Cardiac septum (tissue), 1 donor: ENCODE measurements at regions of chr7 and their contacts with region 1.

Region 1: GRCh38 chr7:25851332-25852210 is 300.4 kb upstream of the NFE2L3 start:
- DNase-seq: peak; percentile 89

Region 2: DNA sequence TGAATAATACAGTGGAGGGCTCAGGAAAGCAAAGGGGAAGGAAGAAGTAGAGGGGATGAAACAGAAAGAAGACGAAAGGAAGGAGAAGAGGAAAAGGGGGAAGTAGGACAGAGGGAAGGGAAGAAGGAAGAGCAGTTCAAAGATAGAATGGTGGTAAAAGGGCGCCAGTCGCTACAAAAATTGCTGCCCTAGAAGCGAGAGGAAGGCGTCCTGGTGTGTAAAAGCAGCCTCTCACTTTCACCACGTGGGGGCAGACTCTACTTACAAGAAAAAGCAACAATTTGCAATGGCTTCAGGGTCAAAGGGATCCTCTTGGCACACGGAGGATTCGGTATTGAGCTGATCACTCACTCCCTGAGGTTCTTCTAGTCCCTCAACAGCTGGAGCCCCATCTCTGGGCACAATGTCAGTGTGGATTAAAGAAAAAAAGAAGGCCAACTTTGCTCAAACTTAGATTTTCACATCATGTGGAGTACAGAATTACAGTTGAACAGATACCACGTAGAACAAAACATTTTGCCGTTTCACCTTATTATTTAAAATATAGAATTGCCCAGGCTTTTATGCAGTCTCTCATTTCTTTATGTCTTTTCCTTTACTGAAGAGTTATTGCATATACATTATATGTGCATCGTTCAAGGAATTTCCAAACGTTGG is 591.9 kb before region 1 on chr7:
- intact Hi-C with region 1: loop called (anchors 2 kb)
- DNase-seq: no peak

Region 3: DNA sequence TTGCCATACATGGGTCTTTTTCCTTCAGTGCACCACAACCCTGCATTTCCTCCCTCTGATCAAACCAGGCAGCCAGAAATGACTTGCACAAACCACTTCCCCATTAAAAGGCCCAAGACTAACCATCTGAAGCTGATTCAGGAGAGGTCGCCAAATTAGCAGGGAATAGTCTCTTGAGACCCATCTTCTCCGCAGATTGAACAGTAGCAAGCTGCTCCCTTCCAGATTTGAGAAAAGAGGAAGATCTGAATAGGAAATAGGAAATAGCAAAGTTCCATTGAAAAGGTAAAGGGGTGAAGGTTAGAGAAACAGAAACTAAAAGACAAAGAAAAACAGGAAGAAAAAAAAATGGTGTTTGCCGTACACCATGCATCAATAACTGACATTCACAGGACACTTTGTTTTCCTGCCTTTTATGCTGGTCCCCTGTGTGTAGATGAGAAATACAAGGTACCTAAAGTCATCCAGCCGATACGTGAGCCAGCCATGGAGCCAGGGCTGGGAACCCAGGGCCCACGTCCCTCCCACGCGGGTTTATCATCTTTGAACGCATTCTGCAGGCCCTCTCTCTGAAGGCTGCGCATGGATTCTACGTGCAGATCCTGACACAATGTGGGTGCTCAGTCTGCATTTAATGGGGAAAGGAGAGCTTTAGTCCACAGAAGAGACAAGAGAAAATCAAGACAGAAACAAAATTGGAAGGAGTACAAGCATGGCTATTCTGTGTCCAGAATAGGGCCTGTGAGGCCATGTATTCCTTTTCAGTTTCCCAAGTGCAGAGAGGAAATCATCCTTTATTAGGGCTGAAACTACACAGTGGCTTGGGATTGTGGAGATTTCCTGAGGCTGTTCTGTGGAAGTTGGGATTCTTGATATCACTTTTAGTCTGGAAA is 354.8 kb before region 1 on chr7:
- intact Hi-C with region 1: loop called (anchors 5 kb)
- DNase-seq: no peak

Region 4: GRCh38 chr7:25619963-25620799 is 231.4 kb before region 1 on chr7:
- intact Hi-C with region 1: loop called (anchors 5 kb)
- DNase-seq: no peak

Region 5: GRCh38 chr7:25716421-25716820 is 135.2 kb before region 1 on chr7:
- intact Hi-C with region 1: loop called (anchors 10 kb)
- DNase-seq: no peak

Region 6: DNA sequence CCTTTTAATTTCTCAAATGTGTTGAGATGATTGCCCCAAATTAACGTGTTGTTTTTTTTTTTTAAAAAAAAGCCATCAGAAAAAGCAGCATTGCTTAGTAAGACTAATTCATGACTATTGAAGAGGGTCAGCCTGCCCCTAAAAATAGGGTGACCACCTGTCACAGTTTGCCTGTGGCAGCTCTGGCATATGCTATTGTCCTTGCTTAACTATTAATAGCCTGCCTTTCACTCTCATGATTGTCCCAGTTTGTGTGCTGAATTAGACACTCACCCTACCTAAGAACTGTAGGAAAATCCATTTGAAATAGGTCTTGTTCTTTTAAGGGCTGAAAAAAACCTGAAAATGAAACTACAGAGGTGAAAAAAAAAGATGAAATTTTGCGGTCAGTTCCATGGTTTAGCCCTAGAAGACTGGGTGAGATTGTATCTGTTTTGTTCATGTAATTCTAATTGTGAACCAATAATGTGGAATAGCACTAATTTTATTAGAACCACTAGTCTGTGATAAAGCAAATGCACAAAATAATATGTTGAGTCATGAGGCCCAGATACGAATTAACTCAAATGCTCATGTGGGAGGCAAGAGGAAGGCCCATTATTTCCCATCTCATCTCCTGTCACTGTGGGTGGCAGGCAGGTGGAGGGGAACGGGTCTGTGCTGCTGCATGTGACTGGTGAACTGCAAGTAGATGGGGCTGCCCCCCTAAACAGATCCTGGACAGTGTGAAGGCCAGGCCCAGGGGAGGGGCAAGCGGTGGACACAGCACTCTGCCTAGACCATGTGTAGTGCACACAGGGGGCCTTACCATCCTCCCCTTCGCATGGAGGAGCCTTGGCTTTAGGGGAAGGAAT is 35.0 kb after region 1 on chr7:
- intact Hi-C with region 1: no loop called
- DNase-seq: no peak